Heart left ventricle (tissue), 16 donors: ENCODE measurements at regions of chr2 and their contacts with region 1.

Region 1: DNA sequence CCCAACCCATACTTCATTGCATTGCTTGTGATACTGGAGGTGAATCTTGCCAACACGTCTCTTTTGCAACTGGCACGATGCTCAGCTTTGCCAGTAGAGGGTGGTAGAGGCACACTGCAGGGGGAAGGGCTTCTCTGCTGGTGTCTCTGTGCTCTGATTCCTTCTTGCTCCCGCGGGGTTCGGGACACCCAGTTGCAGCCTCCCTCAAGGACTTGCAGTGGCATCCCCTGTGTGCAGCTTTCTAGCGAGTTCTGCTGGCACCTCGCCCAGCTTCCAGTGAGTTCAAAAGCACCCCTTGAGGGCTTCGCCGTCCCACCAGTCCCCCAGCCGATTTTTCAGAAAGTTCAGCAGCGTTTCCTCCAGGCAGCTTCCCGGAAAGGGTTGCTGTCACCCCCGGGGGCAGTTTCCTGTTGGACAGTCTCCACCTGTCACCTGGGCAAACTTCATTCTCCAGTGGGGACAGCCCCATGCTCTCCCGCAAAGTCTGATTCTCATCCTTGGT is 35.3 kb upstream of the EN1 start:
- DNase-seq: peak; percentile 26 to 70 (median 56)
- ATAC-seq: peak in 3 of 4 donors; percentile 83 to 88 (median 85)
- H3K4me3 ChIP-seq: peak overlapping the region in 4 of 12 donors; percentile 9 to 48 (median 22)
- H3K27ac ChIP-seq: no peak overlapping the region
- H3K4me1 ChIP-seq: peaks cover 0 to 6% (median 0%) of the 10 kb centered on the region in 12 donors
- H3K27me3 ChIP-seq: peaks cover 0 to 52% (median 13%) of the 10 kb centered on the region in 9 donors
- CTCF ChIP-seq: peak; percentile 64 to 91 (median 76)
- POLR2A ChIP-seq: no peak

Region 2: DNA sequence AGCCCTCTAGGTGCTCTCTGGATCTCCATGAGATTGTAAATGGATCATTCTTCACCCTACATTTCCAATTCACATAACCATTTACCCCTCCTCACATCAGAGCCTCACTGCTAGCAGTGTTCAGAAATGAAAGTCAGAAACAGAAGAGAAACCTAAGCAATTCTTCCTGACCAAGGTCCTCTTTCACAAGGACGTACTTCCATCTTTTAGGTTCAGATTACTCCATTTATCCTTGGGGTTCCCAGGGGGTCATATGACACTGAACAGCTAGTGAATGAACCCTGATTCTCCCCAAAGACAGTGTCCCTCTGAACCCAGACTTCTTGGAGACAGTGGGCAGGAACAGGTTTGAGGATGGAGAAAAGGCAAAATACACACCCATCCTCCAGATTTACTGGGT is 46.3 kb after region 1 on chr2:
- intact Hi-C with region 1: no loop called
- DNase-seq: no peak
- ATAC-seq: no peak
- H3K4me3 ChIP-seq: no peak overlapping the region
- H3K27ac ChIP-seq: no peak overlapping the region
- H3K4me1 ChIP-seq: peaks cover 0 to 22% (median 0%) of the 10 kb centered on the region in 12 donors
- H3K27me3 ChIP-seq: peaks cover 0 to 7% (median 0%) of the 10 kb centered on the region in 9 donors
- CTCF ChIP-seq: no peak
- POLR2A ChIP-seq: no peak

Region 3: GRCh38 chr2:119174216-119175037 is 291.7 kb after region 1 on chr2:
- intact Hi-C with region 1: loop called in 3 of 10 experiments (anchors 5 to 10 kb)
- DNase-seq: peak in 2 of 5 donors; percentile 31 to 34
- ATAC-seq: peak in 3 of 4 donors; percentile 51 to 64 (median 54)
- H3K4me3 ChIP-seq: no peak overlapping the region
- H3K27ac ChIP-seq: no peak overlapping the region
- H3K4me1 ChIP-seq: peaks cover 0 to 4% (median 0%) of the 10 kb centered on the region in 12 donors
- H3K27me3 ChIP-seq: peaks cover 0 to 9% (median 0%) of the 10 kb centered on the region in 9 donors
- CTCF ChIP-seq: peak; percentile 52 to 79 (median 64)
- POLR2A ChIP-seq: no peak

Region 4: GRCh38 chr2:119290859-119291587 is 408.3 kb after region 1 on chr2:
- intact Hi-C with region 1: loop called (anchors 2 to 10 kb)
- DNase-seq: peak; percentile 68 to 93 (median 89)
- ATAC-seq: peak; percentile 29 to 95 (median 90)
- H3K4me3 ChIP-seq: no peak overlapping the region
- H3K27ac ChIP-seq: no peak overlapping the region
- H3K4me1 ChIP-seq: peaks cover 0 to 15% (median 7%) of the 10 kb centered on the region in 12 donors
- H3K27me3 ChIP-seq: no peaks in the 10 kb centered on the region
- CTCF ChIP-seq: peak; percentile 49 to 97 (median 92)
- POLR2A ChIP-seq: no peak